Activated naive CD4-positive, alpha-beta T cell treated with anti-CD3 and anti-CD28 coated beads for 36 hours (primary cell): ENCODE measurements at regions of chr15 and their contacts with region 1.

Region 1: GRCh38 chr15:66946578-66947164 is 118.7 kb upstream of the SMAD3 start:
- DNase-seq: peak; percentile 85
- H3K4me3 Mint-ChIP-seq: no peak overlapping the region
- H3K27ac Mint-ChIP-seq: no peak overlapping the region
- H3K4me1 Mint-ChIP-seq: no peaks in the 10 kb centered on the region
- H3K27me3 Mint-ChIP-seq: no peaks in the 10 kb centered on the region

Region 2: DNA sequence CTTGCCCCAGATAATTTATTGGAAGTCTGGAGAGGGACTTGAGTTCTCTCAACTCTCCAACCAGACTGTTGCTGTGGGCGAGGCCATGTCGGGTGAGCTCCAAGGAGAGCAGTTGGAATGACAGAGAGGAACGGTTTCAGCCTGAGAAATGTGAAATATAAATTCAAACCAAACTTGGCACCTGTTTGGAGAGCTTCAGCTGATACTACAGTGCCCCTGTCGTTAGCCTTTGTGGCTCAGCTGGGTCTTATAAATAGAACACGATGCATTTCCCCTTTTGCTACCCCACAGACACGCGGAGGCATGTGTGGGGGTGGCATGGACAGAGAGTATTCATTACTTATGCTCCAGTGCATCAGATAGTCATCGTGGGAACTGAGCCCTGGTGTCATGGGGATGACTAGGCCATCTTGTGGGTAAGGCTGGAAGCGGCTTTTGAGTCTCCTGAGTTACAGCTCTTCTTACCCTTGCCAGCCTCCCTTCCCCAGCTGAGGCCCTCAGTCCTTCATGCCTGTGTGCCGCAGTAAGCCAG is 134.3 kb after region 1 on chr15:
- CTCF ChIA-PET with region 1: no interaction called
- intact Hi-C with region 1: loop called (anchors 1 kb)
- DNase-seq: peak; percentile 83
- H3K4me3 Mint-ChIP-seq: no peak overlapping the region
- H3K27ac Mint-ChIP-seq: peak overlapping the region; percentile 76
- H3K4me1 Mint-ChIP-seq: peaks cover 80% of the 10 kb centered on the region
- H3K27me3 Mint-ChIP-seq: no peaks in the 10 kb centered on the region

Region 3: GRCh38 chr15:67181191-67181645 is 234.5 kb after region 1 on chr15:
- CTCF ChIA-PET with region 1: no interaction called
- intact Hi-C with region 1: loop called (anchors 2 kb)
- DNase-seq: peak; percentile 32
- H3K4me3 Mint-ChIP-seq: no peak overlapping the region
- H3K27ac Mint-ChIP-seq: no peak overlapping the region
- H3K4me1 Mint-ChIP-seq: peaks cover 8% of the 10 kb centered on the region
- H3K27me3 Mint-ChIP-seq: no peaks in the 10 kb centered on the region

Region 4: DNA sequence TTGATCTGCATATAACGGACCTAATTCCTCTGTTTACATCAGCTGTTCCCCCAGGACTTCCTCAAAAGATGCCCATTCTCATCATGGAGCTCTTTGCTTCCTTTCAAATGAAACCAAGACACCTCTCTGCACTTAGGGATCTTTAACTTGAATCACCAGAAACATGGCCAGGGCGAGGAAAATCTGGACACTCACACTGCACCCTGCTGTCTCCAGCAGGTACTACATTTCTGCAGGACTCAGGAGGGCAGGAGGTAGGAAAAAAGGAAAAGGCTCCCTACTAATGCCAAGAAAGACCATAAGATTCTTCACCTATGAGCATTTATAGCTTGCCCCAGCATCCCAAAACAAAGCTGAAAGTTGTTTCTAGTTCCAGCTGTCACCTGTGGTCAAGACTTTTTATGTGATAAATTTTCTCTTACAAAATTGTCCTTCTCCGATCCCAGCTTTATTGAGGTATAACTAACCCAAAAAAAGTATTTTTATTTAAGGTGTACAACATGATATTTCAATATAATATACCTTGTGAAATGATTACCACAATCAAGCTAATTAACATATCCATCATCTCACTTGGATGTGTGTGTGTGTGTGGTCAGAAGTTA is 486.9 kb after region 1 on chr15:
- CTCF ChIA-PET with region 1: interaction called, 24 read pairs
- intact Hi-C with region 1: loop called (anchors 1 kb)
- DNase-seq: peak; percentile 51
- H3K4me3 Mint-ChIP-seq: no peak overlapping the region
- H3K27ac Mint-ChIP-seq: no peak overlapping the region
- H3K4me1 Mint-ChIP-seq: no peaks in the 10 kb centered on the region
- H3K27me3 Mint-ChIP-seq: no peaks in the 10 kb centered on the region